Keratinocyte (primary cell): ENCODE measurements at regions of chr1 and their contacts with region 1.

Region 1: DNA sequence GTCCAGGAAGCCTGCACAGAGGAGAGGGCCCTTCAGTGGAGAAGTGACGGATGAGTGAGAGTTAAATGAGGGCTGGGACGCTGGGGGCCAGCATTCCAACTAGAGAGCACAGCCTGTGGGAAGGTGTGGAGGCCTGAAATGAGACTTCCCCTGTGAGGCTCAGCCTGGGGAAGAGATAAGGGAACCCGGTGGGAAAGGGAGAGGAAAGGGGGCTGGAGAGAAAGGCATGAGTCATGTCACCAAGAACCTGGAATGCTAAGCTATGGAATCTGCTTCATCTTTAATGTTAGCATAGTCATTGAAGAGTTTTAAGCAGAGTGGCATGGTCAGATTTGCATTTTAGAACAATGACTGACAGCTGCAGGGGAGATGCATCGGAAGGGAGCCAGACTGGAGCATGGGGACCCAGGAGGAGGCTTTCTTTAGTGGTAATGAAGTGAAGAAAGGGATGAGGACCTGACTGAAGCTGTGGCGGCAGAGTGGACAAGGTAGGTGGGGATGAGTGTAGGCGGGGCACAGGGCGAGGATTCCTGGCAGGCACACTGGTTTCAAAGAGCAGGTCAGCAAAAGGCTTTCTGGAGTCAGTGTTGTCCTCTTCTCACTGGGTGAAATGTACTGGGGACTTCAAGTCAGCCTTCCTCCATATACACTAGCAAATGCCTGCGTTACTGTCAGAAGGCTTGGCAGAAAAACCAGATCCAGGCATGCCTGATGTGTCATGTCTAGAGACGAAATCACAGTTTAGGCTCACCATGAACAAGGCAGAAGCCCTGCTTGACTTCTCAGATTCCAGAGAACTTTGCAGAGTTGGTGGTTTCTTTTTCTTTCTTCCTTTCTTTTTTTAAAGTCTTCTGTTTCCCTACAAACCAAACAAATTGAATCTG is 8.0 kb downstream of the RGL1 start:
- DNase-seq: no peak
- H3K4me3 ChIP-seq: no peak overlapping the region
- H3K27ac ChIP-seq: no peak overlapping the region
- H3K4me1 ChIP-seq: peaks cover 15% of the 10 kb centered on the region
- H3K27me3 ChIP-seq: no peaks in the 10 kb centered on the region
- CTCF ChIP-seq: no peak

Region 2: GRCh38 chr1:183871142-183871541 is 58.2 kb after region 1 on chr1:
- dilution Hi-C with region 1: loop called (anchors 5 kb)
- DNase-seq: no peak
- H3K4me3 ChIP-seq: no peak overlapping the region
- H3K27ac ChIP-seq: no peak overlapping the region
- H3K4me1 ChIP-seq: no peaks in the 10 kb centered on the region
- H3K27me3 ChIP-seq: no peaks in the 10 kb centered on the region
- CTCF ChIP-seq: no peak